ENCODE measurements at regions of chr12 and their contacts with region 1.

Region 1: DNA sequence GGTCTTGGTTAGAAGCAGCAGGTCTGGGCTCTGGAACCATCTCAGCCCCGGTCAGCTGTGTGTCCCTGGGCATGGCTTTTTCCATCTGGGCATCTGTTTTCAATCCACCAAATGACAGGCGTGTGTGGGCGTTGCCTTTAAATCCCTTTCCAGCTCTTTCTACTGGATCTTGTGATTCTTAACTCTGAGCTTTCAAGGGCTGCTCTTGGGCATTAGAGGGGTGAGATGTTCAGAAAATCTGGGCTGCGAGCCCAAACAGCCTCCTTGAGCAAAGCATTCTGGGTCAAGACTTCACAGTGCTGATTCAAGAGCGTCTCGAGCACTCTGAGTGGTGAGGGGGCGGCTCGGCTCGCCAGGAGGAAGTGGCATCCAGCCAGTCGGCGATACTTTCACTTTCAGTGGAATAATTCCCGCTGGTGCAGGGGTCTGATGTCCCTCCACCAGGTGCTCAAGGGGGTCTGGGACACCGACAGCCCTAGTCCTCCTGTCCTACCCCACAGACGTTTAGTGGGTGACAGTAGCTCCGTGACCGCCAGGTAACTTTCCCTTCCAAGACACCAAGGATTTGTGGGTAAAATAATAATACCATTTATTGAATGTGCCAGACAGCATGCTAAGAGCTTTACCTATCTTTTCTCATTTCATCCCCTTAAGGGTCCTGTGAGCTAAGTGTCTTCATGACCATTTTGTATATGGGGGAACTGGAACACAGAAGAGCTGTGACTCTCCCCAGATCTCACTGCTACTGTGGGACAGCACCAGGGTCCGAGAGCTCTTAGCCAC is 114.0 kb downstream of the PLXNC1 start:
- DNase-seq: peak; percentile 88 to 94
- H3K4me3 ChIP-seq: peak overlapping the region; percentile 56 to 67
- H3K27ac ChIP-seq: peak overlapping the region; percentile 79 to 87
- H3K4me1 ChIP-seq: peaks cover 0 to 18% (median 13%) of the 10 kb centered on the region in 4 donors
- H3K27me3 ChIP-seq: no peaks in the 10 kb centered on the region
- CTCF ChIP-seq: no peak

Region 2: GRCh38 chr12:94329362-94329761 is 66.9 kb after region 1 on chr12:
- intact Hi-C with region 1: no loop called
- DNase-seq: no peak
- H3K4me3 ChIP-seq: no peak overlapping the region
- H3K27ac ChIP-seq: no peak overlapping the region
- H3K4me1 ChIP-seq: no peaks in the 10 kb centered on the region
- H3K27me3 ChIP-seq: no peaks in the 10 kb centered on the region
- CTCF ChIP-seq: peak; percentile 6

Region 3: DNA sequence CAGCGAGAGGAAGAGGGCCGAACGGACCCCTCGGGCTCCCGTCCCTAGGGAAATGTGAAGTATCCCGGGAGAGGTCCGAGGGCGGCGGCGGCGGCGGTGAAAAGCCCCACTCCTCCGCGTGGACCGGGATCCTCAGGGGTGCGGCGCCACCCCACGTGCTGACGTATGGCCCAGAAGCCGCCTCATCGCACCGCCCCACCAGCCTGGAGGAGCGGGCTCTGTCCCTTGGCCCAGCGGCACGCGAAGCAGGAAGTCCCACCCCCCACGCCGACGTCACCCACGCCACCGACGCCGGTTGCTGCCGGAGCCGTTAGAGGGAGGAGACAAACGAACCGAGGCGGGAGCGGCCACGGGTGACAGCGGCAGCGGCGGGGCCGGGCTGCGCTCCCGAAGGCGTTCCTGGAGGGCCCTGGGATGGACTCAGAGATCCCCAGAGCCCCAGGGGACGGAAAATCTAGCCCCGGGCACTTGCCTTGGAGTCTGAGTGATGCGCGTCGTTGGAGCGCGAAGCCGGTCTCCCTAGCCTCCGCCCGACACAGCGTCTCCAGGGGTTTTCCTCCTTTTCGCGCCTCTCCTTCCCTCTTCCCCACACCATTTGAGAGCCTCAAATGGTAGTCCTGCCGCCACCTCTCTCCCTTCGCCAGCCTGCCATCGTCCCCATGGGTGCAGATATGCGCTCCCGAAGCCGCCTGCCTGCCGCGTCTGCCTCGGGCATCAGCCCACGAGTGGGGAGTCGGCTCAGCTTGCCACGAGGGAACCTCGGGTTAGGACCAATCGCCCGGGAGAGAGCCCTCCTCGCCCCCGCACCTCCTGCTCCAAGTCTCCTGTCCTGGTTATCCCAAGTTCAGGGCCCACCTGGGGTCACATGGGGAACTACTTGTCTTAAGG is 197.6 kb after region 1 on chr12 and contains the start of gene CEP83:
- intact Hi-C with region 1: loop called (anchors 10 kb)
- DNase-seq: peak; percentile 94 to 98
- H3K4me3 ChIP-seq: peak within 1 kb of the TSS; percentile 63 to 81
- H3K27ac ChIP-seq: peak within 1 kb of the TSS; percentile 76 to 93
- H3K4me1 ChIP-seq: peaks cover 0 to 22% (median 5%) of the 10 kb centered on the region in 4 donors
- H3K27me3 ChIP-seq: no peaks in the 10 kb centered on the region
- CTCF ChIP-seq: no peak

Measured in tibial artery (tissue), 4 donors.